PC-3 (cell line): ENCODE measurements at regions of chr2 and their contacts with region 1.

Region 1: GRCh38 chr2:40434638-40435296 is 17.1 kb downstream of the SLC8A1 start:
- DNase-seq: peak; percentile 99
- ATAC-seq: peak; percentile 95
- H3K4me3 ChIP-seq: peak overlapping the region; percentile 2; the same call in 1 of the 2 replicates
- H3K27ac ChIP-seq: peak overlapping the region; percentile 72
- H3K4me1 ChIP-seq: peaks cover 34% of the 10 kb centered on the region
- H3K27me3 ChIP-seq: no peaks in the 10 kb centered on the region
- CTCF ChIP-seq: no peak

Region 2: GRCh38 chr2:40363631-40364030 is 71.1 kb before region 1 on chr2:
- CTCF ChIA-PET with region 1: no interaction called
- POLR2A ChIA-PET with region 1: no interaction called
- intact Hi-C with region 1: loop called (anchors 2 kb)
- DNase-seq: peak; percentile 71
- ATAC-seq: peak; percentile 63
- H3K4me3 ChIP-seq: peak overlapping the region; percentile 63
- H3K27ac ChIP-seq: peak overlapping the region; percentile 41
- H3K4me1 ChIP-seq: peaks cover 38% of the 10 kb centered on the region
- H3K27me3 ChIP-seq: no peaks in the 10 kb centered on the region
- CTCF ChIP-seq: no peak

Region 3: GRCh38 chr2:40412456-40412855 is 22.3 kb before region 1 on chr2:
- CTCF ChIA-PET with region 1: interaction called, 3 read pairs
- POLR2A ChIA-PET with region 1: no interaction called
- intact Hi-C with region 1: loop called (anchors 2 kb)
- DNase-seq: peak; percentile 90
- ATAC-seq: peak; percentile 95
- H3K4me3 ChIP-seq: peak overlapping the region; percentile 12; the same call in 1 of the 2 replicates
- H3K27ac ChIP-seq: 0 out of 2 replicates have a peak overlapping the region, but pooled peaks have one; percentile 19
- H3K4me1 ChIP-seq: peaks cover 32% of the 10 kb centered on the region
- H3K27me3 ChIP-seq: no peaks in the 10 kb centered on the region
- CTCF ChIP-seq: no peak

Region 4: GRCh38 chr2:40448468-40449079 is 13.8 kb after region 1 on chr2:
- CTCF ChIA-PET with region 1: no interaction called
- POLR2A ChIA-PET with region 1: no interaction called
- intact Hi-C with region 1: loop called (anchors 2 kb)
- DNase-seq: peak; percentile 68
- ATAC-seq: no peak
- H3K4me3 ChIP-seq: no peak overlapping the region
- H3K27ac ChIP-seq: no peak overlapping the region
- H3K4me1 ChIP-seq: no peaks in the 10 kb centered on the region
- H3K27me3 ChIP-seq: no peaks in the 10 kb centered on the region
- CTCF ChIP-seq: peak; percentile 84